CD8-positive, alpha-beta T cell (primary cell): ENCODE measurements at regions of chr1 and their contacts with region 1.

Region 1: DNA sequence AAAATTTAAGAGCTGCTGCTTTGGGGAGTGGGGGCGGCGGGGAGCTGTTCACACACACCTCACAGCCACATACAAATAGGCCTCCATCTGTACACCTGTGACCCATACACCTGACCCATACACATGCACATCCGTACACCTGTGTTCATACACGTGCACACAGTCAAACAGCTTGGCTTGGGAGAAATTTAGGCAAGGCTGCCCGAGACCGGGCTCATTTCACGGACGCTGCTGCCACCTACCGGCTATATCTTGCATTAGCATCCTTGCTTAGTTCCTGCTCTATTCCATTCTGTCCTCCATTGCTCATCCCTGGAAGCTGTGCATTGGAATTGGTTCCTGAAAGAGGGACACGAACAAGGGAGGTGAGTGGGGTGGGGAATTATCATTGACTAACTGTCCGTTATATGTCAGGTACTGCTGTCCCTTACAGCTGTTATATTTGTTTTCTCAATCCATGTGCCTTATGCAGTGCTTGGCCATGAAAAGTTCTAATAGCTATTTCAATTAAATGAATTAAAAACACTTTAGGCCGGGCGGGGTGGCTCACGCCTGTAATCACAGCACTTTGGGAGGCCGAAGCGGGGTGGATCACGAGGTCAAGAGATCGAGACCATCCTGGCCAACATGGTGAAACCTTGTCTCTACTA is 37.1 kb upstream of the EPB41 start:
- DNase-seq: peak; percentile 49 to 87 (median 80)
- ATAC-seq: peak; percentile 83
- H3K4me3 ChIP-seq: no peak overlapping the region
- H3K4me3 Mint-ChIP-seq: no peak overlapping the region
- H3K27ac ChIP-seq: no peak overlapping the region
- H3K27ac Mint-ChIP-seq: no peak overlapping the region
- H3K4me1 ChIP-seq: no peaks in the 10 kb centered on the region
- H3K4me1 Mint-ChIP-seq: peaks cover 10% of the 10 kb centered on the region
- H3K27me3 ChIP-seq: no peaks in the 10 kb centered on the region
- H3K27me3 Mint-ChIP-seq: peaks cover 9% of the 10 kb centered on the region
- CTCF ChIP-seq: peak; percentile 97

Region 2: DNA sequence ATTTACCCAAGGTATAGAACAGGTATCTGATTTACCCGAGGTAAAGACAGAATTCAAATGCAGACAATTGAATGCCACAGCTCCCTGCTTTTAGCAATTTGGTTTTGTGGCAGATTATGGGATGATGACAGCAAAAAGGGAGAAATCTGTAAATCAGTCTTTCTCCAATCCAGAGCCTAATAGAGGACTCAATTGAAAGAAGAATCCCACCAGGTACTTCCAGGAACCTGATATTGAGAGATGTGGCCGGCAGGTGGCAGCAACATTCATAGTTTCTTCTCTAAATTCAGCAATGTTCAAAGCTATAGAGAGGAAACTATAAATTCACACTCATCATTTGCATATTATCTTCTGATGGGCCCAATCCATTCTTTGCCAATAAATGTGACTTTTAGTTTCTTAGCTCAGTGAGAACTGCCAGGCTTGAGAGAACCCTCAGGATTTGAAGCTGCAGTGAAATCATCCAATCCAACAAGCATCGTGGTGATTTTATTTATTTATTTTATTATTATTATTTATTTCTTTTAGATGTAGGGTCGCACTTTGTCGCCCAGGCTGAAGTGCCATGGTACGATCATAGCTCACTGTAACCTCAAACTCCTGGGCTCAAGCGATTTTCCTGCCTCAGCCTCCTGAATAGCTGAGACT is 517.5 kb before region 1 on chr1:
- CTCF ChIA-PET with region 1: interaction called, 112 read pairs
- POLR2A ChIA-PET with region 1: interaction called, 4 read pairs
- intact Hi-C with region 1: loop called in 1 of 2 experiments (anchors 1 kb)
- DNase-seq: peak; percentile 50 to 83 (median 75)
- ATAC-seq: peak; percentile 75
- H3K4me3 ChIP-seq: no peak overlapping the region
- H3K4me3 Mint-ChIP-seq: no peak overlapping the region
- H3K27ac ChIP-seq: no peak overlapping the region
- H3K27ac Mint-ChIP-seq: no peak overlapping the region
- H3K4me1 ChIP-seq: no peaks in the 10 kb centered on the region
- H3K4me1 Mint-ChIP-seq: peaks cover 2% of the 10 kb centered on the region
- H3K27me3 ChIP-seq: no peaks in the 10 kb centered on the region
- H3K27me3 Mint-ChIP-seq: no peaks in the 10 kb centered on the region
- CTCF ChIP-seq: peak; percentile 79

Region 3: DNA sequence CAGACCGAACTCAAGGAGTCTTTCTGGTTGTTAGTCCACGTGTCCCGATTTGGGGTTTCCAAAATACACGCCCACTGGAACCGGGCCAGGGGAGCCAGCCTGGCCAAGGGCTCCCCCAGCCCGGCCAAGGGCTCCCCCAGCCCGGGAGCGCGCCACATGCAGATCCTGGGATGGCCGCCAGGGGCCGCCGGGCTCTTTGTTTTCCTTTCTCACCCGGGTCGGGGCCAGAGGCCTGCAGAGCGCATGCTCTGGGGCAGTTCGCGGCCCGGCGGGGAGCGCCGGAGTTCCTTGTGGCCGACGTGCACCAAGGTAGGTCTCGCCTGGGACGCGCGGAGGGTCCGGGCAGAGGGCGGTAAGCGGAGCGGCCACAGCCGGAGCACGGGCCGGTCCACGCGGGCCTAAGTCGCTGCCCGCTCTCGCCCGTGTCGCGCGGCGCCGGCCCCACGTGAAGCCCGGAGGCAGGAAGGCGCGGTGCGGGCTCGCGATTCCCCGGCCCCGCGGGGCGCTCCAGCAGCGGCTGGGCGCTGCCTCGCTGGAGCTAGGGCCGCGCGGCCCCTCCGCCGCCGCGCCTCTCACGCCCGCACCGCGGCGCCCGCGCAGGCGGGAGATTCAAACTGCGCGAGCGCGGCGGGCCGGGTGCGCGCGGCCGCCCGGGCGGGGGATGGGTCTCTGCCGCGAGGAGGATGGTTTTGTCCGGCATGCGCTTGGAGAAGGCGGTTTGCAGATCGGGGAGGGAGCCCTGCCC is 359.1 kb before region 1 on chr1:
- CTCF ChIA-PET with region 1: interaction called, 27 read pairs
- POLR2A ChIA-PET with region 1: no interaction called
- intact Hi-C with region 1: loop called (anchors 1 kb)
- DNase-seq: peak; percentile 76 to 93 (median 88)
- ATAC-seq: peak; percentile 91
- H3K4me3 ChIP-seq: peak overlapping the region; percentile 59 to 79
- H3K4me3 Mint-ChIP-seq: peak overlapping the region; percentile 89
- H3K27ac ChIP-seq: peak overlapping the region; percentile 55 to 57
- H3K27ac Mint-ChIP-seq: peak overlapping the region; percentile 84
- H3K4me1 ChIP-seq: peaks cover 21% of the 10 kb centered on the region
- H3K4me1 Mint-ChIP-seq: peaks cover 28% of the 10 kb centered on the region
- H3K27me3 ChIP-seq: no peaks in the 10 kb centered on the region
- H3K27me3 Mint-ChIP-seq: no peaks in the 10 kb centered on the region
- CTCF ChIP-seq: peak; percentile 98

Region 4: DNA sequence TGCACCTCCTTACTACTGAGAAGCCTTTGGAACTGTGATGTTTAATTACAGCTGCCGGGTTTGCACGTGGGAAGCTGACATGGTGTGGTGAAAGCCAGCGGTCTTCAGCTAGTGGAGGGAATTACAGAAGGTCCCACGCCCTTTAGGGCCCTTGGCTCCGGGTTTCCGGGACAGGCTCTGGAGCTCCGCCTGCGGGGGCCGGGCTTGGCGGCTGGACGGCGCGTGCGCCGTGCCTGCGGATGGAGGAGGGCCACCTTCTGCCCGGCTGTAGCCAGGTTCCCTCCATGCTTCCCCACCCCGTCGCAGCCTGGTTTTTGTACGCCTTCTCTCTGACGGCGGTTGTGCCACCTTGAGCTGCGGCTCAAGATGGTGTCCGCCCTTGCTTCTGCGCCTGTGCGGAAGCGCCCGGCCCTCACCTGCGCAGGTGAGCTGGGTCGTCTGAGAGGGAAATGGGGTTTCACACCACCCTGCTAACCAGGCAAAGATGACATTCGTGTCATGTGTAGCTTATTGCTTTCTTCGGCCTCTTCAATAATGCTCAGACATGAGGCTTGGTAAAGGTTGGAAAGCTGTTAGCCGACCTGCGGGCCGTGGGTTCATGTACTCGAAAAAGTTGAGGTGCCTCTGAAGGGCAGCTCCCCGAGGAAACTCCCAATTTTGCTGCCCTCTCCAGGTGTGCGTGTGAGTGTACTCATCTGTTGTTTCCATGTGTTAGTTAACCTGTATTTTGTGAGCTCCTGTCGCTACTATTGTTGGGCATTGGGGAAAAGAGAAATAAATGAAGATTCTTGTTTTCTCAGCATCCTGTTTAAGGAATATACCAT is 101.9 kb before region 1 on chr1:
- CTCF ChIA-PET with region 1: interaction called, 11 read pairs
- POLR2A ChIA-PET with region 1: no interaction called
- intact Hi-C with region 1: no loop called
- DNase-seq: peak; percentile 47 to 86 (median 69)
- ATAC-seq: peak; percentile 92
- H3K4me3 ChIP-seq: peak overlapping the region; percentile 48 to 56
- H3K4me3 Mint-ChIP-seq: peak overlapping the region; percentile 82
- H3K27ac ChIP-seq: peak overlapping the region; percentile 54 to 58
- H3K27ac Mint-ChIP-seq: peak overlapping the region; percentile 91
- H3K4me1 ChIP-seq: peaks cover 13% of the 10 kb centered on the region
- H3K4me1 Mint-ChIP-seq: peaks cover 12% of the 10 kb centered on the region
- H3K27me3 ChIP-seq: no peaks in the 10 kb centered on the region
- H3K27me3 Mint-ChIP-seq: no peaks in the 10 kb centered on the region
- CTCF ChIP-seq: no peak

Region 5: DNA sequence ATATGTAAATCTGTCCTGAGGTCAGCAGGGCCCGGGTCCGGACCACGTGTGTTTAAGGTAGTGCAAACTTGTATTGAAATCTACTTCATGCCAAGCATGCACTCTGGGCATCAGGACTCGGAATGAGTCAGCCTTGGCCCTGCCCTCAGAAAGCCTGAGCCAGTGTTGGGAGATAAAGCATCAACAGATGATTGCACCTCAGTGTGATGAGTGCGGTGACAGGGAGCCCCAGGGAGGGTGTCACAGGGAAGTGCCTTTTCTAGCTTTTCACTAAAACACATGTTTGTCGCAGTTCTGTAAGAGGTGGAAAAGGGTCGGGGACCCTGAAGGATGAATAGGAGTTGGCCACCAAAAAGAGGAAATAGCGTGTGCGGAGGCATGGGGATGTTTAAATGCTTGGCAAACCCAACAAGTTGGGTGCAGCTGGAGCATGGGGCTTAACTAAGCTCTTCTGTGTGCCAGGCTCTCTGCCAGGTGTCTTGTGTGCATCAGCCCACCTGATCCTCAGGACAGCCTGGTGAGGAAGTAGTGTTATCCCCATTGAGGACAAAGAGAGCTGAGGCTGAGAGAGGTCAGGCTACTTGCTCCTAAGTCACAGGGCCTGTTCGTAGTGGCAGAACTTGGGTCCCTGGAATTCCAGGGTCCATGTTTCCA is 11.1 kb before region 1 on chr1:
- CTCF ChIA-PET with region 1: interaction called, 30 read pairs
- POLR2A ChIA-PET with region 1: interaction called, 4 read pairs
- intact Hi-C with region 1: no loop called
- DNase-seq: no peak
- ATAC-seq: no peak
- H3K4me3 ChIP-seq: no peak overlapping the region
- H3K4me3 Mint-ChIP-seq: no peak overlapping the region
- H3K27ac ChIP-seq: no peak overlapping the region
- H3K27ac Mint-ChIP-seq: no peak overlapping the region
- H3K4me1 ChIP-seq: no peaks in the 10 kb centered on the region
- H3K4me1 Mint-ChIP-seq: no peaks in the 10 kb centered on the region
- H3K27me3 ChIP-seq: no peaks in the 10 kb centered on the region
- H3K27me3 Mint-ChIP-seq: no peaks in the 10 kb centered on the region
- CTCF ChIP-seq: no peak

Region 6: DNA sequence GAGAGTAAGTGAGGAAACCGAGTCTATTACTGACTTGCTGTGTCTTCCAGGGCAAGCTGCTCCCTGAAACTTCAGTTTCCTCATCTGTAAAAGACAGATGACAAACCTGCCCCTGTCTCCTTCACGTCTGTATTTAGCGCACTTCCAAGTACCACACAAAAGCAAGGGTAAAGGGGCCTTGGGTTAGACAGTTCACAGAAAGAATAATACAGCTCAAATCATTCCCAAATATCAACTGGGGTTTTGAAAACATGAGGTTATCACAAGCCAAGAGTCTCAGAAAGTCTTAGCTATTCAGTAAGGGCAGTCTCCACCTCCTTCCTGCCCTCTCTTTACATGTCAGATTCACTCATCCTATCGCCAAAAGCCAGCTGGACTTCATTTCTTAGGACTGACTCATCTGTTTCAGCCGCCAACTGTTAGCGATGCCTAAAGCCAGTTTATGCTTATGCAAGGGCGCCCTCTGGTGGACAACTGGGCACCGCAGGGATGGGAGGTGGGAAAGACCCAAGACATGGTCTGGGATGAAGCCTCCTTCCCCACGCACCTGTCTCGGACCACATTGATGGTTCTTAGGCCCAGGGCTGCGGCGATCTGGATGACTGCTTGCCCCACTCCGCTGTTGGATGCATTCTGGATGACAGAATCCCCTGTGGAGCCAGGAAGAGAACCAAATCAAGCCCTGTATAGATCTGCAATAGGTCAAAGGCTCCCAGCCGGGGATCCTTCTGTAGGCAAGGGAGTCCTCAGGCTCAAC is 325.5 kb after region 1 on chr1:
- CTCF ChIA-PET with region 1: interaction called, 202 read pairs
- POLR2A ChIA-PET with region 1: no interaction called
- intact Hi-C with region 1: loop called (anchors 1 kb)
- DNase-seq: peak; percentile 67 to 95 (median 87)
- ATAC-seq: peak; percentile 84
- H3K4me3 ChIP-seq: no peak overlapping the region
- H3K4me3 Mint-ChIP-seq: no peak overlapping the region
- H3K27ac ChIP-seq: no peak overlapping the region
- H3K27ac Mint-ChIP-seq: no peak overlapping the region
- H3K4me1 ChIP-seq: no peaks in the 10 kb centered on the region
- H3K4me1 Mint-ChIP-seq: no peaks in the 10 kb centered on the region
- H3K27me3 ChIP-seq: no peaks in the 10 kb centered on the region
- H3K27me3 Mint-ChIP-seq: no peaks in the 10 kb centered on the region
- CTCF ChIP-seq: peak; percentile 93